ENCODE measurements at regions of chr4 and their contacts with region 1.

Region 1: DNA sequence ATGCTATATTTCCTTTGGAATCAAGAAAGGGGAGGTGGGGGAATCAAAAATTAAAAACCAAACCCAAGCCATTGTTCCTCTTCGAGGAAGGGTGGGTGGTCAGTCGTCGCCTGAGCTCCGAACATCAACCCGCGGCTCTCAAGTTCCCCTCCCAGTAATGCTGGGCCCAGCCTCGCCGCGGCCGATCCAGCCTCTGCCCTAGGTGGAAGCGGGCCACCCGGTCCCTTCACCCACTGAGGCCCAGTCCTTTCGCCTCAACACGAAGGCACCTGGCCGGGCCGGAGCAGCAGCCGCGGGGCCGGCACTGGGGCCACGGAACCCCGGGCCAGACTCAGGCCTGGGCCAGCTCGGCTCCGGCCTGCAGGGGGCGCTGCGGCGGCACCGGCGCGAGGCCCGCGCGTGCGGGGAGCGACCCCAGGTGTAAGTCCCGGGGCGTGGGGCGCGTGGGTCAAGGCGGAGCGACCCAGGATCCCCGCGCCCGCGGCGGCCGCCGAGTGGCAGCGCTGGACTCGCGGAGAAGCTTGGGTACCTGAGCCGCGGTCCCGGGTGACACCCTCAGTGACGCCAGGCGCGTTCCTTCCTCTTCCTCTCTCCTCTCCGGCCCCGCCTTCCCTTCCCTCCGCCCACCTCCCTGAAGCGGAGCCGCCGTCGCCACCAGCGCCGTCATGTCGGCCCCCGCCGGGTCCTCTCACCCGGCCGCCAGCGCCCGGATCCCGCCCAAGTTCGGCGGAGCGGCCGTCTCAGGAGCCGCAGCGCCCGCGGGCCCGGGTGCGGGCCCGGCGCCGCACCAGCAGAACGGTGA is at the start of gene SEC24B:
- DNase-seq: peak; percentile 86
- H3K4me3 Mint-ChIP-seq: peak within 1 kb of the TSS; percentile 84
- H3K27ac Mint-ChIP-seq: peak within 1 kb of the TSS; percentile 71
- H3K4me1 Mint-ChIP-seq: peaks cover 51% of the 10 kb centered on the region
- H3K27me3 Mint-ChIP-seq: no peaks in the 10 kb centered on the region
- total RNA-seq, gene SEC24B: 32.0 and 32.3 TPM in 2 replicates

Region 2: GRCh38 chr4:109472343-109472761 is 38.9 kb after region 1 on chr4:
- intact Hi-C with region 1: loop called (anchors 5 kb)
- DNase-seq: no peak
- H3K4me3 Mint-ChIP-seq: no peak overlapping the region
- H3K27ac Mint-ChIP-seq: no peak overlapping the region
- H3K4me1 Mint-ChIP-seq: peaks cover 26% of the 10 kb centered on the region
- H3K27me3 Mint-ChIP-seq: no peaks in the 10 kb centered on the region

Region 3: DNA sequence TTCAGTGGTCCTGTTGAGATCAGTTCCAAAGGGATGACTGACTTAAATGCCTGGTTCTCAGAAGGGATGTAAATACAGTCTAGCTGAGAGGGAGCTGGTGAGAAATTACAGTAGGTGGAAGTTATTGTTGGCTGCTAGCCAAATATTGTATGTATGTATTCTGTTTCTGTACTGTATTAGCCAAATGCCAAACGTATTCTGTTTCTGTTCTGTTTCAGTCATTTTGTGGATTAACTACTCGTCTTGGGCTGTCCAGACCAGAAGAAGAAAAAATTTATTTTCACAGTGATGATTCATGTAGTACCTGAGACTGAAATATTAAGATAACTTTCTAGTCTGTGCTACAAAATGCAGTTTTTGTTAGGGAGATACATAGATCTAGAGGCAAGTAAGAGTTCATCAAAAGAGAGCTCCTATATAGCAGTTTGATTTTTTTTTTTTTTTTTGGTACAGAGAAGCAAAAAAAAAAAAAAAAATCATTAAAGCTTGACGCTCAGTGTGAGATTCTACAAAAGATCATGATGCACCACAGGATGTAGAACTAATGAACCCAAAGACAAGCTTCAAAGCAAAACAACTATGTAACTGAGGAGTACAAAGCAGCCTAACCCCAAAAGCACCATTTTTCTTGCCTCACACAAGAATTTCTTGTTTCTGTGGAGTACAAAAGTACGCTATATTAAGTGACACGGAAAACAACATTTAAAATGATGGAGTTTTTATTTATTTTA is 215.0 kb after region 1 on chr4:
- intact Hi-C with region 1: loop called (anchors 5 kb)
- DNase-seq: no peak
- H3K4me3 Mint-ChIP-seq: peak overlapping the region; percentile 44
- H3K27ac Mint-ChIP-seq: peak overlapping the region; percentile 82
- H3K4me1 Mint-ChIP-seq: peaks cover 27% of the 10 kb centered on the region
- H3K27me3 Mint-ChIP-seq: no peaks in the 10 kb centered on the region

Region 4: DNA sequence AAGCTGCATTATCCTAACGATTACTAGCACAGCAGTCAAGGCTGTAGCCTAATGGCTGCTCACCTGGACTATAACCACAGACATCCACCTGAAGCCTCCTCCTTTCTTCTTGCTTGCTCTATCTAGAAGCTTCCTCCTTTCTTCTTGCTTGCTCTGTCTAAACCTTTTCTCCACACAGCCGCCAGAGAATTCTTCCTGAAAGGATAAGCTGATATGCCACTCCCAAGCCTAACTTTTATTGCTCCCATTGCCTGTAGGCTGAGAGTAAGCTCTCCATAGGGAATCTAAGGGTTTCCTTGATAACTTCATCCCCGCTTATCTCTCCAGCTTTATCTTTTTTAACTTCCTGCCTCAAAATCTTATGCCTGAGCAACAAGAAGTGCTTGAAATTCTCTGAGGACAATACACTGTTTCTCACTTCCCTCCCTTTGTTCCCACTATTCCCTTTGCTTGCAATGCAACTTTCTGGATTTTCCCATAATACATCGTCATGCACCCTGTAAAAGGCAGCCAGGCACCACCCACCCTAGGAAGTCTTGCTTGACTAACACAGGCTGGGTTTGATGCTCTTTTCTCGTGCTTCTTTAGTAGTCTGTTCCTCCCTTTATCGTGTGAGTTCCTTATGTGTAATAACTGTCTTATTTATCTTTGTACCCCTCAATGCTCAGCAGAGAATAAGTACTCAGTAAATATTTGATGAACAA is 413.1 kb after region 1 on chr4:
- intact Hi-C with region 1: no loop called
- DNase-seq: no peak
- H3K4me3 Mint-ChIP-seq: no peak overlapping the region
- H3K27ac Mint-ChIP-seq: no peak overlapping the region
- H3K4me1 Mint-ChIP-seq: no peaks in the 10 kb centered on the region
- H3K27me3 Mint-ChIP-seq: peaks cover 10% of the 10 kb centered on the region

Region 5: GRCh38 chr4:109990261-109991257 is 557.2 kb after region 1 on chr4:
- intact Hi-C with region 1: loop called (anchors 5 kb)
- DNase-seq: no peak
- H3K4me3 Mint-ChIP-seq: no peak overlapping the region
- H3K27ac Mint-ChIP-seq: no peak overlapping the region
- H3K4me1 Mint-ChIP-seq: peaks cover 19% of the 10 kb centered on the region
- H3K27me3 Mint-ChIP-seq: peaks cover 11% of the 10 kb centered on the region

Measured in activated T-helper 2 cell treated with anti-CD3 and anti-CD28 coated beads, Interferon-gamma antibody, Interleukin-2, Interleukin-4, amounts not matched to agents 10 μg/mL and 5 μg/mL and 100 μg/mL, durations not matched to agents 14 hours and 24 hours and 36 hours (primary cell).